ENCODE measurements at regions of chr10 and their contacts with region 1.

Region 1: DNA sequence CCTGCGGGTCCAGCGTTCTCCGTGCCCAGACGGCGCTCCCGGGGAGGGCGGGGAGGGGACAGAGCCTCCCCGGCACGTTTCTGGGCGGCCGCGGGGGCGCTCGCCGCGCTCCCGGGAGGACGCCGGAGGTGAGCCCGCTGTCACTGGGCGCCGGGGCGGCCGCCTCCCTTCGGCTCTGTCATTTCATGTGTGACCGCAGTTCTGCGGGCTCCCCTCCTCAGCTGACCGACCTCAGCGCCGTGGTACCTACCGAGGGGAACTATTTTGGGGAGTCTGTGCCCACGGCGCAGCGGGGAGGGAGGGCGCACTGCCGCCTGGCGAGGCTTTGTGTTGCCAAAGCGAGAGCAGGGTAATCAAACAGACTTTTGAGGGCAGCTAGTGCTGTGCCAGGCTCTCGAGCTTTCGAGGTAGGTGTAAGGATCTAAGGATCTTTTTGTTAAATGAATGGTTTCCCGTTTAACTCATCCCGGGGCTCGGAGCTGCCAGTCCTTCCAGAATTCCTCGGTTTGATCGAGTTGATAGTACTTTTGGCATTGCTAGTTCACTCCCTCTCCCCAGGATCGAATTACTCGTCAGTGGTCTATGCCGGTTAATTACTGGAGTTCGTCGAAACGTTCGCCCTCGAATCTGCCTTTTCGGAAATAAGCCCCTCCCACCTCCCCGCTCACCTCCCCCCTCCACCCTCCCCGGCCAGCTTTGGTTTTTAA is 1.9 kb downstream of the ARID5B start:
- DNase-seq: peak; percentile 63
- H3K4me3 ChIP-seq: peak overlapping the region; percentile 66 to 91 (median 85)
- H3K27ac ChIP-seq: peak overlapping the region; percentile 92
- H3K4me1 ChIP-seq: peaks cover 27% of the 10 kb centered on the region
- H3K27me3 ChIP-seq: no peaks in the 10 kb centered on the region
- CTCF ChIP-seq: peak in 1 of 2 donors; percentile 44

Region 2: GRCh38 chr10:61750929-61751471 is 152.4 kb before region 1 on chr10:
- CTCF ChIA-PET with region 1: interaction called, 3 read pairs
- dilution Hi-C with region 1: no loop called
- in situ Hi-C with region 1: no loop called
- intact Hi-C with region 1: loop called (anchors 2 kb)
- DNase-seq: peak; percentile 59
- H3K4me3 ChIP-seq: no peak overlapping the region
- H3K27ac ChIP-seq: no peak overlapping the region
- H3K4me1 ChIP-seq: peaks cover 29% of the 10 kb centered on the region
- H3K27me3 ChIP-seq: no peaks in the 10 kb centered on the region
- CTCF ChIP-seq: peak; percentile 90 to 95

Region 3: GRCh38 chr10:61931620-61932254 is 28.4 kb after region 1 on chr10:
- CTCF ChIA-PET with region 1: no interaction called
- dilution Hi-C with region 1: no loop called
- in situ Hi-C with region 1: no loop called
- intact Hi-C with region 1: no loop called
- DNase-seq: peak; percentile 49
- H3K4me3 ChIP-seq: no peak overlapping the region
- H3K27ac ChIP-seq: no peak overlapping the region
- H3K4me1 ChIP-seq: peaks cover 7% of the 10 kb centered on the region
- H3K27me3 ChIP-seq: no peaks in the 10 kb centered on the region
- CTCF ChIP-seq: no peak

Region 4: GRCh38 chr10:61943674-61944410 is 40.5 kb after region 1 on chr10:
- CTCF ChIA-PET with region 1: no interaction called
- dilution Hi-C with region 1: no loop called
- in situ Hi-C with region 1: loop called in 1 of 2 experiments (anchors 5 kb)
- intact Hi-C with region 1: loop called (anchors 1 kb)
- DNase-seq: peak; percentile 59
- H3K4me3 ChIP-seq: peak overlapping the region in 2 of 3 experiments; percentile 34 to 58
- H3K27ac ChIP-seq: peak overlapping the region; percentile 96
- H3K4me1 ChIP-seq: peaks cover 23% of the 10 kb centered on the region
- H3K27me3 ChIP-seq: no peaks in the 10 kb centered on the region
- CTCF ChIP-seq: peak; percentile 16 to 29

Region 5: DNA sequence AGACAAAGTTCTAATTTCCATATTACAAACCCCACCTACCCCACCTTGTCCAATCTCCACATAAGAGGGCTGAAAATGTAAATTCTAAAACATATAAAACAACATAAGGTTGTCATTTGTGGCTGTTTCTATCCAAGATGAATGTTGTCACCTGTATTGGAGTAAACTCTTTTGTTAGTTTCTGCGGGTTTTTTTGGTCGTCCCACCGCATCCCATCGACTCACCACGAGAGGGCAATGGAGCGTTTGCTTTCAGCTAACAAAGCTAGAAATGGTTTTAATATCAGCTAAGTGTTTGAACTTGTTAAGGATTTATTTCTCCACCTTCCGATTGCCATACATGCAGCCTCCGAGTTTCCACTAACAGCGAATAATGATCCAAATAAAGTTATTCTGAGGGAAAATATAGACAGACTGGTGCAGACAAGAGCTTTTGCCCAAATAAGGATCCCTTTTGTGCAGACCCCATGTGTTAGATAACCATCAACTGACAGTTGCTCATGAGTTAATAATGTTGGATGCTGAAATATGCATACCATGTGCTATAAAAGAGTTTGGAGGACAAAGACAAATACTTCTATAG is 135.3 kb after region 1 on chr10:
- CTCF ChIA-PET with region 1: no interaction called
- dilution Hi-C with region 1: no loop called
- in situ Hi-C with region 1: no loop called
- intact Hi-C with region 1: loop called (anchors 1 kb)
- DNase-seq: peak; percentile 71
- H3K4me3 ChIP-seq: no peak overlapping the region
- H3K27ac ChIP-seq: peak overlapping the region; percentile 93
- H3K4me1 ChIP-seq: peaks cover 43% of the 10 kb centered on the region
- H3K27me3 ChIP-seq: no peaks in the 10 kb centered on the region
- CTCF ChIP-seq: peak; percentile 85 to 86

Region 6: DNA sequence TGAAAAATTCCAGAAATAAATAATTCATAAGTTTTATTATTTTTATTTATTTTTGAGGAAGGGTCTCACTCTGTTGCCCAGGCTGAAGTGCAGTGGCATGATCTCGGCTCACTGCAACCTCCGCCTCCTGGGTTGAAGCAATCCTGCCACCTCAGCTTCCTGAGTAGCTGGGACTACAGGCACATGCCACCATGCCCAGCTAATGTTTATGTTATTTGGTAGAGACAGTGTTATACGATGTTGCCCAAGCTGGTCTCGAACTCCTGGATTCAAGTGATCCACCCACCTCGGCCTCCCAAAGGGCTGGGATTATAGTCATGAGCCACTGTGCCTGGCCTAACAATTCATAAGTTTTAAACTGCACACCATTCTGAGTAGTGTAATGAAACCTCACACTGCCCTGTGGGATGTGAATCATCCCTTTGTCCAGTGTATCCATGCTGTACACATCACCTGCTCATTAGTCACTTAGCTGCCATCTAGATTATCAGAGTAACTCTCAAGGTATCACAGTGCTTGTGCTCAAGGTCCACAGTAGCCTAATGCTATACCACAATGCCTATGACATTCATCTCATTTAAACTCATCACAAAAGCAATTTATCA is 347.3 kb after region 1 on chr10:
- CTCF ChIA-PET with region 1: no interaction called
- dilution Hi-C with region 1: no loop called
- in situ Hi-C with region 1: loop called (anchors 5 to 10 kb)
- intact Hi-C with region 1: loop called (anchors 1 kb)
- DNase-seq: peak; percentile 98
- H3K4me3 ChIP-seq: no peak overlapping the region
- H3K27ac ChIP-seq: peak overlapping the region; percentile 51
- H3K4me1 ChIP-seq: no peaks in the 10 kb centered on the region
- H3K27me3 ChIP-seq: no peaks in the 10 kb centered on the region
- CTCF ChIP-seq: no peak

Measured in mammary epithelial cell (primary cell).